Panc1 (cell line): ENCODE measurements at regions of chrX and their contacts with region 1.

Region 1: GRCh38 chrX:68828740-68829552 is at the start of gene EFNB1:
- DNase-seq: peak; percentile 67
- ATAC-seq: peak; percentile 91
- H3K4me3 ChIP-seq: peak within 1 kb of the TSS; percentile 58 to 72
- H3K27ac ChIP-seq: peak within 1 kb of the TSS; percentile 72
- H3K4me1 ChIP-seq: no peaks in the 10 kb centered on the region; the same call in none of the 2 replicates
- H3K27me3 ChIP-seq: no peaks in the 10 kb centered on the region
- CTCF ChIP-seq: no peak
- total RNA-seq, gene EFNB1: 12.9 TPM

Region 2: DNA sequence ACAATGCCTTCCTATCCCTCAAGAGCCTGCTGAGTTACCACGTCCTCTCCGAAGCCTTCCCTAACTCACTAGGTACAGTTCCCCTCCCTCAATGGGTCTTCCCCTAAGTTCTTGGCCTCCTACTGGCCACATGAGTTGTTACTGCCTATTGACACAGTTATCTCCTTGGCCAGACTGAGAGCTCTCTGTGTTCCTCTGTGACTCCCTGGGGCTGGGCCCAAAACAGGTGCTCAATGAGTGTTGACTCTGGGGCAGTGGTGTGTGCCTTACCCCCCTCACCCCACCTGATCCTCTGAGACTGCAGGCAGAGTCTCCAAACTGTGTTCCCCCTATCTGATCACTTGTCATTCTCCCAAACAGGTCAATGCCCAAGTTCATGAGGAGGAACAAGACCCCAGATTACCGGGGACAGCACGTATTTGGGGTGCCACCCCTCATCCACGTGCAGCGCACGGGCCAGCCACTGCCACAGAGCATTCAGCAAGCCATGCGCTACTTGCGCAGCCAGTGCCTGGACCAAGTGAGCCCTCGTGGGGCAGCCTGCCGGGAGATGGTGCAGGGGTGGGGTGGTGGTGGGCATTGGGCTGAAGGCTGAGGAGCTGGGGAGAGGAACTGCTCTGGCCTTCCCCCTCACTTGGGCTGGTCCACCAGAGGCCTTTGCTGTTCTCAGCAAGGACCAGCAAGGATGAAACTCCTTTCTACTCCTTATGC is 108.9 kb before region 1 on chrX:
- CTCF ChIA-PET with region 1: no interaction called
- POLR2A ChIA-PET with region 1: no interaction called
- in situ Hi-C with region 1: no loop called
- intact Hi-C with region 1: no loop called
- DNase-seq: no peak
- ATAC-seq: 0 out of 2 replicates have a peak, but pooled peaks have one; percentile 78
- H3K4me3 ChIP-seq: no peak overlapping the region
- H3K27ac ChIP-seq: no peak overlapping the region
- H3K4me1 ChIP-seq: no peaks in the 10 kb centered on the region
- H3K27me3 ChIP-seq: no peaks in the 10 kb centered on the region
- CTCF ChIP-seq: no peak; the same call in 1 of the 2 replicates

Region 3: GRCh38 chrX:69060631-69061408 is 231.9 kb after region 1 on chrX:
- CTCF ChIA-PET with region 1: interaction called, 15 read pairs
- POLR2A ChIA-PET with region 1: no interaction called
- in situ Hi-C with region 1: no loop called
- intact Hi-C with region 1: loop called (anchors 2 kb)
- DNase-seq: no peak
- ATAC-seq: peak; percentile 88
- H3K4me3 ChIP-seq: no peak overlapping the region
- H3K27ac ChIP-seq: no peak overlapping the region
- H3K4me1 ChIP-seq: no peaks in the 10 kb centered on the region
- H3K27me3 ChIP-seq: no peaks in the 10 kb centered on the region
- CTCF ChIP-seq: no peak; the same call in 1 of the 2 replicates

Region 4: GRCh38 chrX:69222103-69223090 is 393.5 kb after region 1 on chrX:
- CTCF ChIA-PET with region 1: interaction called, 14 read pairs
- POLR2A ChIA-PET with region 1: no interaction called
- in situ Hi-C with region 1: no loop called
- intact Hi-C with region 1: loop called (anchors 2 kb)
- DNase-seq: peak; percentile 18
- ATAC-seq: peak; percentile 93
- H3K4me3 ChIP-seq: no peak overlapping the region
- H3K27ac ChIP-seq: no peak overlapping the region
- H3K4me1 ChIP-seq: no peaks in the 10 kb centered on the region
- H3K27me3 ChIP-seq: no peaks in the 10 kb centered on the region
- CTCF ChIP-seq: peak; percentile 83

Region 5: GRCh38 chrX:69285881-69286564 is 457.1 kb after region 1 on chrX:
- CTCF ChIA-PET with region 1: interaction called, 4 read pairs
- POLR2A ChIA-PET with region 1: no interaction called
- in situ Hi-C with region 1: no loop called
- intact Hi-C with region 1: loop called (anchors 2 kb)
- DNase-seq: no peak
- ATAC-seq: peak; percentile 89
- H3K4me3 ChIP-seq: peak overlapping the region; percentile 24 to 47
- H3K27ac ChIP-seq: no peak overlapping the region
- H3K4me1 ChIP-seq: no peaks in the 10 kb centered on the region; the same call in 1 of the 2 replicates
- H3K27me3 ChIP-seq: no peaks in the 10 kb centered on the region
- CTCF ChIP-seq: peak; percentile 94

Region 6: DNA sequence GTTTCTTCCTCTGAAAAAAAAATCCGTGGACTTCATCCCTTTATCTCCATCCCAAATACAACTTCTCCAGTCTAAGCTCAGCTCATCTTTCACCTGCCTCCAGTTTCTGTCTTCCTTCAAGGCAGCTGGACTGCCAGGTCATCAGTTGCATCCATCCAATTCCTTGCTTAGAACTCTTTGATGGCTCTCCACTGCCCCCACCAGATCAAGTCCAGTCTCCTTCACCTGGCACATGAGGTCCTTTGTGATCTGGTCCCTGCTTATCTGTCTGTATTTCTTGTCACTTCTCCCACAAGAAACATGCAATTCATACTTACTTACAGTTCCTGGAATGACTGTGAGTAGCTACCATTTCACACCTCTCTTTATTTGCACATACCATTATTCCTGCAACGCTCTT is 1267.1 kb after region 1 on chrX:
- CTCF ChIA-PET with region 1: no interaction called
- POLR2A ChIA-PET with region 1: no interaction called
- in situ Hi-C with region 1: no loop called
- intact Hi-C with region 1: loop called (anchors 10 kb)
- DNase-seq: no peak
- ATAC-seq: no peak
- H3K4me3 ChIP-seq: no peak overlapping the region
- H3K27ac ChIP-seq: no peak overlapping the region
- H3K4me1 ChIP-seq: no peaks in the 10 kb centered on the region
- H3K27me3 ChIP-seq: 0 out of 2 replicates have a peak, but pooled peaks cover 2% of the 10 kb centered on the region
- CTCF ChIP-seq: peak; percentile 36